ENCODE measurements at regions of chr19 and their contacts with region 1.

Region 1: DNA sequence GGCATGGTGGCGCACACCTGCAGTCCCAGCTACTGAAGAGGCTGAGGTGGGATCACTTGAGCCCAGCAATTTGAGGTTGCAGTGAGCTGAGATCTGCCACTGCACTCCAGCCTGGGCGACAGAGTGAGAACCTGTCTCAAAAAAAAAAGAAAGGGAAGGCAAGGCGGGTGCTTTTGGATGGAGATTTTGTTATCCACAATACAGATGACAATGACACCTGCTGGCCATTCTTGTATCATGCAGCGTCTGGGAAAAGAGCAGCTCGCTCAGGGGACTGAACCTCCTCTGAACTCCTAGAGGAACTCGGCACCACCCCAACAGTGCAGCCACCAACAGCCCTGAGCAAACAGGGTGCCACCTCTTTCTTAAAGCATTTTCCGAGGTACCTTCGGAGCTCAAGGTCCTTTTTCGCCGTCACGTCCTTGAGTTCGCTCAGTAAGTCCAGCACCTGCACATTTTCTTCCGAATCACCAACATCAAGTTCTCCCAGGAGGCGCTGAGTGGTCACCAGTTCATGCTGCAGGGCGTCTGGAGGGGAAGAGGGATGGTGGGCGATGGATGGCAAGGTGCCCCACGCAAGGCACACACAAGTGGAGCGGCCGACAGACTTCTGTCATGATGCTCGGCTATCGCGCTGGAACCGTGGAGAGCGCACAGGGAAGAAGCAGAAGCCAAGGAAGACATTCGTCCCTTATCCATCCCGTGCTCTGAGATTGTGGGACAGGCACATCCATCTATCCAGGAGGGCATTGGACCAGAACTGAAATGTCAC is 22.6 kb downstream of the HAUS8 start:
- DNase-seq: no peak
- CTCF ChIP-seq: peak; percentile 14

Region 2: GRCh38 chr19:17226002-17226933 is 173.6 kb after region 1 on chr19 and contains the start of gene OCEL1:
- in situ Hi-C with region 1: loop called (anchors 25 kb)
- DNase-seq: peak; percentile 96
- CTCF ChIP-seq: no peak

Region 3: GRCh38 chr19:17590877-17591276 is 538.3 kb after region 1 on chr19:
- in situ Hi-C with region 1: no loop called
- DNase-seq: no peak
- CTCF ChIP-seq: no peak

Measured in GM13976 (cell line).